Caco-2 (cell line): ENCODE measurements at regions of chr3 and their contacts with region 1.

Region 1: GRCh38 chr3:160003520-160004128 is 15.0 kb downstream of the IL12A start:
- DNase-seq: peak; percentile 58 to 67
- H3K4me3 ChIP-seq: no peak overlapping the region
- H3K4me3 Mint-ChIP-seq: no peak overlapping the region
- H3K27ac Mint-ChIP-seq: no peak overlapping the region
- H3K4me1 ChIP-seq: peaks cover 6% of the 10 kb centered on the region; the same call in 1 of the 2 replicates
- H3K4me1 Mint-ChIP-seq: no peaks in the 10 kb centered on the region
- H3K27me3 ChIP-seq: no peaks in the 10 kb centered on the region
- H3K27me3 Mint-ChIP-seq: no peaks in the 10 kb centered on the region
- CTCF ChIP-seq: peak; percentile 42 to 62

Region 2: GRCh38 chr3:159616212-159616825 is 387.3 kb before region 1 on chr3:
- CTCF ChIA-PET with region 1: no interaction called
- POLR2A ChIA-PET with region 1: no interaction called
- intact Hi-C with region 1: loop called (anchors 10 kb)
- DNase-seq: peak; percentile 72 to 73
- H3K4me3 ChIP-seq: no peak overlapping the region
- H3K4me3 Mint-ChIP-seq: no peak overlapping the region
- H3K27ac Mint-ChIP-seq: no peak overlapping the region
- H3K4me1 ChIP-seq: peaks cover 6% of the 10 kb centered on the region
- H3K4me1 Mint-ChIP-seq: no peaks in the 10 kb centered on the region
- H3K27me3 ChIP-seq: no peaks in the 10 kb centered on the region
- H3K27me3 Mint-ChIP-seq: no peaks in the 10 kb centered on the region
- CTCF ChIP-seq: peak; percentile 51 to 65

Region 3: DNA sequence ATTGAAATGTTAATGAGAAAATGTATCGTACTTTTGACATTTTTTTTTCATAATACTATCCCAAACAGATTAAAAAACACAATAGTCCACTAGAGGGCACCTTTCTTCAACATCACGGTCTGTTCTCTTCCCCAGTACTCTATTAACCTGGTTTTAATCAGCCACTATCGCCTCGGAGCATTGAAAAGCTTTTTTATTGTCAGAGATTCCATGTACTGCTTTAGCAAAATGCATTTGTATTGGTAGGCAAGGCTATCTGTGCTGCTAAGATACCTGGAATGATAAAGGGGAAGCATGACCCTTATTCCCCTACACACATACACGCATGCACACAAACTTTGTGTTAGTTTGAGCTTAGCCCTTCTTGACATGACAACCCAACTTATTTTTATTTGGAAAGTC is 175.1 kb before region 1 on chr3:
- CTCF ChIA-PET with region 1: no interaction called
- POLR2A ChIA-PET with region 1: no interaction called
- intact Hi-C with region 1: loop called (anchors 1 kb)
- DNase-seq: peak in 1 of 2 experiments; percentile 32
- H3K4me3 ChIP-seq: no peak overlapping the region
- H3K4me3 Mint-ChIP-seq: no peak overlapping the region
- H3K27ac Mint-ChIP-seq: no peak overlapping the region
- H3K4me1 ChIP-seq: peaks cover 15% of the 10 kb centered on the region
- H3K4me1 Mint-ChIP-seq: no peaks in the 10 kb centered on the region
- H3K27me3 ChIP-seq: no peaks in the 10 kb centered on the region
- H3K27me3 Mint-ChIP-seq: no peaks in the 10 kb centered on the region
- CTCF ChIP-seq: peak; percentile 37 to 56

Region 4: DNA sequence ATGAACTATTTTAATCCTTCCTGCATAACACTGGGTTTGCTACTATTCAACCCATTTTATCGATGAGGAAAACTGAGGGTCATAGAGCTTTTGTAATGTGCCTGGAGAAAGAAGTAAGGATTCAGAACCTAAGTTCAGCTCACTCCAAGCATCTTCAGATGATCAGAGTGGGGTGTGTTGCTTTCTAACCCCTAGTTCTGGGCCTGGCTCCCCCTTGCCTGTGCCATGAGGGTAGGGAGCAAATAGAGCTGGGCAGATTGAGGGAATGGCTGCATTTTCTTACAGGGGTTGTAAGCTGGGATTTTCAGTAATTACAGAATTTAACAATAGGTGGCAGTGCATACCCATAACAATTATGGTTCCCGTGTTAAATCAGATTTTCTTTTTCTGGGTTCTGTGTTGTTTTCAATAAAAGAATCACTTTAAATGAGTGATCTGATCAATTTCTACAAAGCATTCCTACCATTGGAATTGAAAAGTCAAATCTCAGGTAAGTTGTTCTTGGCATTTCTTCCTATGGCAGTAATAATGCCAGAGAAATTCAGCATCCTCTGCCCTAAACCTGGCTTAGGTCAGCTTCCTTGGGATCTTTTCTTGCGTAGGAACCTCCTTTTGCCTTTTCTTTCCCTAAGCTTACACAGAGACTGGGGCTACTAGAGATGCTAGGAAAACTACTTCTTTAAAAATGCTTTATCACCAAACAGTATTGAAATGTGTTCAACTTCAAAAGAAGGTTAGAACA is 118.8 kb before region 1 on chr3:
- CTCF ChIA-PET with region 1: interaction called, 52 read pairs
- POLR2A ChIA-PET with region 1: no interaction called
- intact Hi-C with region 1: loop called (anchors 1 kb)
- DNase-seq: peak in 1 of 2 experiments; percentile 34
- H3K4me3 ChIP-seq: no peak overlapping the region
- H3K4me3 Mint-ChIP-seq: no peak overlapping the region
- H3K27ac Mint-ChIP-seq: no peak overlapping the region
- H3K4me1 ChIP-seq: no peaks in the 10 kb centered on the region
- H3K4me1 Mint-ChIP-seq: no peaks in the 10 kb centered on the region
- H3K27me3 ChIP-seq: no peaks in the 10 kb centered on the region
- H3K27me3 Mint-ChIP-seq: no peaks in the 10 kb centered on the region
- CTCF ChIP-seq: peak; percentile 47 to 51

Region 5: GRCh38 chr3:159929435-159930141 is 74.0 kb before region 1 on chr3:
- CTCF ChIA-PET with region 1: interaction called, 14 read pairs
- POLR2A ChIA-PET with region 1: no interaction called
- intact Hi-C with region 1: loop called (anchors 1 kb)
- DNase-seq: peak; percentile 32 to 44
- H3K4me3 ChIP-seq: no peak overlapping the region
- H3K4me3 Mint-ChIP-seq: no peak overlapping the region
- H3K27ac Mint-ChIP-seq: no peak overlapping the region
- H3K4me1 ChIP-seq: no peaks in the 10 kb centered on the region
- H3K4me1 Mint-ChIP-seq: no peaks in the 10 kb centered on the region
- H3K27me3 ChIP-seq: no peaks in the 10 kb centered on the region
- H3K27me3 Mint-ChIP-seq: no peaks in the 10 kb centered on the region
- CTCF ChIP-seq: peak in 1 of 2 experiments; percentile 40

Region 6: DNA sequence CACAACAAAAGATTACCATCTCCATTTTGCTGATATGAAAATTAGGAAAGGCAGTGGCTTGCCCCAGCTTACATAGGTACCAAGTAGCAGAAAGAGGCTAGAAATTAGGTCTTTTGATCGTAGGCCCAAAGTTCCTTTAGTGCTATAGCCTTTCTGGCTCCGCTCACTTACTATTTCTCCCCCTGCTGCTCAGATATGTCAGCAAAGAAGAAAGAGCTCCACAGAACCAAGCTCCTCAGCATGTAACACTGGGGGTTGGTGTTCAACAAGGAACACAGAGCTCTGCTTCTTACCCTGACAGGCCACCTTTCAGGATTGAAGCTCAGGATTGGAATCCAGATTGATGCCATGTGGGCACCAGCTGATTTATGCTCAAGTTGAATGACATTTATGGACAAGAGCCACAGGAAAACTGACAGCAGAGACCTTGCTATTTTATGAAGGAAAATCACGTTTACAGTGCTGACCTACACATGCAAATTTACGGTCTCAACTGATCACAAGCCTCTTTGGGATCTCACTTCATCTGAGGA is 21.1 kb before region 1 on chr3:
- CTCF ChIA-PET with region 1: interaction called, 28 read pairs
- POLR2A ChIA-PET with region 1: no interaction called
- intact Hi-C with region 1: no loop called
- DNase-seq: no peak
- H3K4me3 ChIP-seq: no peak overlapping the region
- H3K4me3 Mint-ChIP-seq: no peak overlapping the region
- H3K27ac Mint-ChIP-seq: no peak overlapping the region
- H3K4me1 ChIP-seq: peaks cover 6% of the 10 kb centered on the region; the same call in 1 of the 2 replicates
- H3K4me1 Mint-ChIP-seq: peaks cover 8% of the 10 kb centered on the region
- H3K27me3 ChIP-seq: no peaks in the 10 kb centered on the region
- H3K27me3 Mint-ChIP-seq: no peaks in the 10 kb centered on the region
- CTCF ChIP-seq: peak in 1 of 2 experiments; percentile 29

Region 7: DNA sequence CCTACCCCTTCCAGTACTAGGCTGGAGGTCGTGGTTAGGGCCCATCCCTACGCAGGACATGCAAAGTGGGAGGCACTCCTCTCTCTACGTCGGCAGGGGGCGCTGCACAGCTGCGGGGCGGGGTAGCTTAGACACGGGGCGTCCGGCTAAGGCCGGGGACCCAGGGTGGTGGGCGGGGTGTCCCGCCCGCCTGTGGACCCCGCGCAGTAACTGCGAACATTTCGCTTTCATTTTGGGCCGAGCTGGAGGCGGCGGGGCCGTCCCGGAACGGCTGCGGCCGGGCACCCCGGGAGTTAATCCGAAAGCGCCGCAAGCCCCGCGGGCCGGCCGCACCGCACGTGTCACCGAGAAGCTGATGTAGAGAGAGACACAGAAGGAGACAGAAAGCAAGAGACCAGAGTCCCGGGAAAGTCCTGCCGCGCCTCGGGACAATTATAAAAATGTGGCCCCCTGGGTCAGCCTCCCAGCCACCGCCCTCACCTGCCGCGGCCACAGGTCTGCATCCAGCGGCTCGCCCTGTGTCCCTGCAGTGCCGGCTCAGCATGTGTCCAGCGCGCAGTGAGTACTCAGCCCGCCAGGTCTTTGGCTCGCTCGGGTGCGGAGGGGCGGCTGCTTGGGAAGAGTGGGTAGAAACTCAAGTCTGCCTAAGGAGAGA is 14.9 kb before region 1 on chr3 and contains the start of gene IL12A:
- CTCF ChIA-PET with region 1: interaction called, 28 read pairs
- POLR2A ChIA-PET with region 1: interaction called, 11 read pairs
- intact Hi-C with region 1: loop called (anchors 1 kb)
- DNase-seq: peak; percentile 80 to 86
- H3K4me3 ChIP-seq: peak within 1 kb of the TSS; percentile 55
- H3K4me3 Mint-ChIP-seq: peak within 1 kb of the TSS; percentile 83
- H3K27ac Mint-ChIP-seq: no peak within 1 kb of the TSS
- H3K4me1 ChIP-seq: peaks cover 11% of the 10 kb centered on the region
- H3K4me1 Mint-ChIP-seq: peaks cover 18% of the 10 kb centered on the region
- H3K27me3 ChIP-seq: no peaks in the 10 kb centered on the region
- H3K27me3 Mint-ChIP-seq: no peaks in the 10 kb centered on the region
- CTCF ChIP-seq: peak; percentile 91
- total RNA-seq, gene IL12A: 0.60 and 0.95 TPM in 2 replicates